ENCODE measurements at regions of chr18 and their contacts with region 1.

Region 1: GRCh38 chr18:43919551-43919950 is 642.3 kb upstream of the SYT4 start:
- DNase-seq: no peak
- H3K4me3 ChIP-seq: no peak overlapping the region
- H3K27ac ChIP-seq: no peak overlapping the region
- H3K4me1 ChIP-seq: no peaks in the 10 kb centered on the region
- H3K27me3 ChIP-seq: no peaks in the 10 kb centered on the region
- CTCF ChIP-seq: no peak
- POLR2A ChIP-seq: no peak

Region 2: DNA sequence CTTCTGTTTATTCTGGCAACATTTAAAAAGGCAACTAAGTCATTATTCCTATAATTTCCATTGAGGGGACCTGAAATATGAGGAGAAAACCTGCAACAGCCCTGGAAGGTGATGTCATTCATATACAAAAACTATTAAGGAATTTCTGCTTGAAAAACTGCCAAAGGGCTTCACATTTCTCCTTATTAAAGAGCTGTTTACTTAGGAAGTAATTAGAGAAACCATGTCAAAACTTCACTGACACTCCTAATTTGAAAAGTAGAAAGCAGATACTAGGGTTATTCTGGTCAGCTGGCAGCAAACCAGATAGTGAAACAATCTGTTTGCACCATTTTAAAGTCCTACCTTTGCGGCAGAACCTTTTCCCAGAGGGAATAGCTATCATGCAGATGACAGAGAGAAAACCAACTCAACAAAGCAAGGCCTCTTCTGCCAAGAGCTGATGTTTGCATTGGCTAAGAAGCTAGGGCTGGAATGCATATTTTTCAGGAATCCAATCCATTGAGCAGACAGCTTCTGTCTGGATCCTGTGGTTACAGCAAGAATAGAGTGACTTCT is 50.0 kb before region 1 on chr18:
- intact Hi-C with region 1: loop called in 1 of 2 experiments (anchors 10 kb)
- DNase-seq: no peak
- H3K4me3 ChIP-seq: no peak overlapping the region
- H3K27ac ChIP-seq: no peak overlapping the region
- H3K4me1 ChIP-seq: no peaks in the 10 kb centered on the region
- H3K27me3 ChIP-seq: no peaks in the 10 kb centered on the region
- CTCF ChIP-seq: no peak
- POLR2A ChIP-seq: no peak

Region 3: GRCh38 chr18:43992741-43993140 is 73.2 kb after region 1 on chr18:
- intact Hi-C with region 1: no loop called
- DNase-seq: no peak
- H3K4me3 ChIP-seq: no peak overlapping the region
- H3K27ac ChIP-seq: no peak overlapping the region
- H3K4me1 ChIP-seq: no peaks in the 10 kb centered on the region
- H3K27me3 ChIP-seq: no peaks in the 10 kb centered on the region
- CTCF ChIP-seq: no peak
- POLR2A ChIP-seq: no peak

Measured in adrenal gland (tissue), 19 donors.